ENCODE measurements at regions of chr14 and their contacts with region 1.

Region 1: DNA sequence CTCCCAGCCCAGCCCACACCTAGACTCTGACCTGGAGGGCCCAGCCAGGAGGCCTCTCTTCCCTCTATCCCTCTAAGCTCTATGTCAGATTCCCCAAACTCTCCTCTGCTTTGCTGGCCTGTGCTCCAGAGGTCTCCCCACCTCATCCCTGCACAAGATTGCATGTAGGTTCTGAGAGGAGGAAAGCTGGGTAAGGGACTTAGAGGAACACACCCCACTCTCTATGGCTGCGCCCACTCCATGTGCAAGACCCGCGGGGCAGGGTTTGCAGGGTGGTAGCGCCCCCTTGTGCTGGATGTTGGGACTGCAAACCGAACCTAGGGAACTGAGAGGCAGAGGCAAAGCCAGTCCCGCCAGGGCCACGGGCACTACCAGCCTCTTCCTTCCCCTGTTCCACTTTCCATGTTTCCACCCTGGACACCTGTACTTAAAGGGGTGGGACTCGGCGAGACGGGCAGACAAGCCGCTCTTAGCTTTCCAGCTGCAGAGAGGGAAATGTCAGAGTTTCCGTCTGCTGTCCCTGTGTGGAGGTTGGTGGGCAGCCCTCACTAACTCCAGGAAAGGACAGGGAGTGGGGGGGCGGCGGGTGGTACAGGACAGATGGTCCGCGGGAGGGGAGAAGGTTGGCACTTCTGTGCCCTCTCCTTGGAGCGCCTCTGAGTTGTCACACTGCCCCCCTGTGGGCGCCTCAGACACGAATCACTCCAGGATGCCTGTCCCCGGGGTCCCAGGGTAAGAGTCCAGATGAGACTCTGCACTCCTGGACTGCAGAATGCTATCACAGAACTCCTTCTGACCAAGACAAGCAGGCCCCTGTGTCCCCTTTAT is 16.8 kb downstream of the MMP14 start:
- DNase-seq: peak; percentile 84
- CTCF ChIP-seq: peak; percentile 96

Region 2: GRCh38 chr14:22412926-22413411 is 440.2 kb before region 1 on chr14:
- in situ Hi-C with region 1: no loop called
- DNase-seq: no peak
- CTCF ChIP-seq: no peak

Region 3: GRCh38 chr14:22668417-22668816 is 184.7 kb before region 1 on chr14:
- in situ Hi-C with region 1: loop called (anchors 10 kb)
- DNase-seq: peak; percentile 50
- CTCF ChIP-seq: no peak

Region 4: GRCh38 chr14:22778084-22778483 is 75.1 kb before region 1 on chr14:
- in situ Hi-C with region 1: loop called (anchors 10 kb)
- DNase-seq: no peak
- CTCF ChIP-seq: no peak

Region 5: DNA sequence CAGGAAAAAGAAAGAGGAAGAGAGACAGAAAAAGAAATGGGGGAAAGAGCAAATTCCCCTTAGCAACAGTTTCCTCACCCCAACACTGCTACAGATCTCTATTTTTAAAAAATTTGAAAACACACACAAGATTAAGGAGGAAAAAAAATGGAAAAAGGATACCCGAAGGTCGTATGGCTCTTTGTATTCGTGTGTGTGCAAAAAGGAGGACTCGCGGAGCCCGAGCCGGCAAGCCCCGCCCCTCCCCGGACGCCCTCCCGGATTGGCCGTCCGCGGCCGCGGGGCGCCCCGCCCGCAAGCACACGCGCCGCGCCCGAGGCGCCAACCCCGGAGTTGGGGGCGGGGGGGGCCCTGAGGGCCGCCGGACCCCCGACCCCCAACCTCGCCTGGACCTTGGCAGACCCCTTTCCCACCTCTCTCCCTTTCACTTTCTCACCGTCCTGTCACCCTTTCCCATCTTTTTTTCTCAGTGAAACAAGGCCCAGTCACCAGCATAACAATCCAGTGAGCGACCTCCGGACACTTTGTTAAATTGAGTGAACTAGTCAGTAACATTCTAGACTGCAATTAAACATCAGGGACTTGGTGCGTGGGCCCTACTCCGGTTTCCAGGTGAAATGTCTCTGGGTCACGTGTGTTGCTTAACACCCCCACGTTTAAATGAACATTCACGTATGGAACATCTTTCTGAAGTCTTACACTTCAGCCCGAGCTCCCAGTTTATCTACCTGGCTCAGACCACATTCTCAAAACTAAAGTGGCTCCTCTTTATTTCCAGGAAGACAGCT is 157.0 kb after region 1 on chr14 and contains the start of gene C14orf93:
- in situ Hi-C with region 1: no loop called
- DNase-seq: peak; percentile 91
- CTCF ChIP-seq: no peak

Region 6: DNA sequence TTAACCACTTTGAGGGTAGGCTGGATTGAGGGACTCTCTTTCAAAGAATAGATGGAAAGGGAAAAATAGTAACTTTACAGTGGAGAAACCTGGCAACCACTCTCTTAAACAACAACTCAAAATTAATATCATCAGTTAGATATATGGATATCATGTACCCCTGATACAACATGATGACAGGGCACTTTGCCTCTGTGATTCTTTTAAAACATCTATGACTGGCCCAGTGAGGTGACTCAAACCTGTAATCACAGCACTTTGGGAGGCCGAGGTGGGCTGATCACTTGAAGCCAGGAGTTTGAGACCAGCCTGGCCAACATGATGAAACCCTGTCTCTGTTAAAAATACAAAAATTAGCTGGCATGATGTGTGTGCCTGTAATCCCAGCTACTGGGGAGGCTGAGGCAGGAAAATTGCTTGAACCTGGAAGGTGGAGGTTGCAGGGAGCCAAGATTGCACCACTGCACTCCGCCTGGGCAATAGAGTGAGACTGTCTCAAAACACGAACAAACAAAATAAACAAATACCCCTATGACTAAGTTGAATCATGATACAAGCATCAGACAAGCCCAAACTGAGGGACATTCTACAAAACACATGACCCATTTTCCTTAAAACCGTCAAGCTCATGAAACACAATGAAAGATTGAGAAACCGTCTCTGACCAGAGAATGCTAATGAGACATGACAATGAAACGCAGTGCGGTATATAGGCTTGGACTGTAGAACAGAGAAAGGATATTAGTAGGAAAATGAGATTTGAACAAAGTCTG is 356.7 kb after region 1 on chr14:
- in situ Hi-C with region 1: no loop called
- DNase-seq: no peak
- CTCF ChIP-seq: no peak